ENCODE measurements at regions of chr2 and their contacts with region 1.

Region 1: DNA sequence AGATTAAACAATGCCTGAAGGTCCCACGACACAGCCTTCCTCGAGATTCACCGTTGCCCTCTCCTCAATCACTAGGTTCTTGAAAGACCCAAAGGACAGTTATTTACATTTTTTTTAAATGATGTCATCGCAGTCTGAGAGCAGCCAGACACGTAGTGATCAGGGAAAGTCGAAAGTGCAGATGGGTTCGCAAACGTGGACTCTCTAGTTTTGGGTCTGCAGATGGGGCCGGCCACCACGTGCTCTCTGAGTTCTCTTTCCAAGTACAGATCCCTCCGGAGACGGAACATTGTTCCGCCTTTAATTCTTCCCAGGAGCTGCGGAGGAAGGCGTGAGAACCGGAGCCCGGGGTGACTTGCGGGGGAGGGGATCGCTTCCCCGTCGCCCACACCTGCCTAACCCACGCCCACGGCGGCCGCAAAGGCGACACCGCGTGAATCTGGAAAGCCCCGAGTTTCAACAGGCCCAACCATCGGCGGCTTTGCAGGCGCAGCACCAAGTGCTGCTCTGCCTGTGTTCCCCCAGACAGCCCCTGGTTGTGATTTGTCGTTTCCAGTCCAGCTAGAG is 54.3 kb downstream of the PKDCC start:
- H3K4me3 Mint-ChIP-seq: peak overlapping the region; percentile 51
- H3K27ac Mint-ChIP-seq: peak overlapping the region; percentile 94
- H3K4me1 Mint-ChIP-seq: peaks cover 58% of the 10 kb centered on the region
- H3K27me3 Mint-ChIP-seq: peaks cover 3% of the 10 kb centered on the region

Region 2: GRCh38 chr2:42047488-42048298 is 54.4 kb before region 1 on chr2 and contains the start of gene PKDCC:
- intact Hi-C with region 1: no loop called
- H3K4me3 Mint-ChIP-seq: peak within 1 kb of the TSS; percentile 47
- H3K27ac Mint-ChIP-seq: no peak within 1 kb of the TSS
- H3K4me1 Mint-ChIP-seq: no peaks in the 10 kb centered on the region
- H3K27me3 Mint-ChIP-seq: peaks cover 78% of the 10 kb centered on the region

Region 3: DNA sequence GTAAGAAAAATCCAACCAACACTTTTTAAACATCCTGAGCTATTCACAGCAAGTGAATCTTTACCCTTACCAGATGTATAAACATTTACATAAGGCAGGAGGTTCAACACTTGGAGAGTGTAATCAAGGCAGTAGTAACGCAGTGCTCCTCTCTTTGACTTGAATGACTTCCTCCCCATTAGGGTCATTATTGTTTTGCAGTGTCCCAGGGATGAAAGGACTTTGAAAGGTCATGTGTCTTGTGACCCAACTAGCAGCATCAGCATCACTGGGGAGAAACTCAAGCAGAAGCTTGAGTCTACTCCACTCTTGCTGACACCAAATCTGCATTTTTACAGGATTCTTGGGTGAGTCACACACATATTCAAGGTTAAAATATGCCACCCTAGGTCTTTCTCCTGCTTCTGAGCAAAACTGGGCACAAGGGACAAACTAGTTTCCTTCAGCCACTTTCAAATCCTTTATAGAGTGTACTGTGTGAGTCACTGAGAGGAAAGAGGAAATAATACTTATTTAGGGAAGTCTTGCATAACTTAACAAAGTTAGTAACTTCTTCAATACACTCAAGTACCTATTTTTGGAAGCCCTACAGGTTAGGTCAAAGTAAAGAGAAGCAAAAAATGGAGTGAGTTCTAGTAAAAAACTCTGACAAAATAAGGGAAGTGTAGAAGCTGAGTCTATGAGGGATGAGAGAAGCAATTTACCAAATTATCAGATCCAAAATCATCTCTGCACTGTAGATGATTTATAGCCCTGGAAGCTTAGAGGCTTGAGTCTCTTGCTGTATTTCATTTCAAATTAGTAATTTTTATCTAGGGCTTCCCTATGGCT is 16.0 kb after region 1 on chr2:
- intact Hi-C with region 1: loop called (anchors 1 kb)
- H3K4me3 Mint-ChIP-seq: no peak overlapping the region
- H3K27ac Mint-ChIP-seq: peak overlapping the region; percentile 72
- H3K4me1 Mint-ChIP-seq: peaks cover 58% of the 10 kb centered on the region
- H3K27me3 Mint-ChIP-seq: peaks cover 3% of the 10 kb centered on the region

Region 4: DNA sequence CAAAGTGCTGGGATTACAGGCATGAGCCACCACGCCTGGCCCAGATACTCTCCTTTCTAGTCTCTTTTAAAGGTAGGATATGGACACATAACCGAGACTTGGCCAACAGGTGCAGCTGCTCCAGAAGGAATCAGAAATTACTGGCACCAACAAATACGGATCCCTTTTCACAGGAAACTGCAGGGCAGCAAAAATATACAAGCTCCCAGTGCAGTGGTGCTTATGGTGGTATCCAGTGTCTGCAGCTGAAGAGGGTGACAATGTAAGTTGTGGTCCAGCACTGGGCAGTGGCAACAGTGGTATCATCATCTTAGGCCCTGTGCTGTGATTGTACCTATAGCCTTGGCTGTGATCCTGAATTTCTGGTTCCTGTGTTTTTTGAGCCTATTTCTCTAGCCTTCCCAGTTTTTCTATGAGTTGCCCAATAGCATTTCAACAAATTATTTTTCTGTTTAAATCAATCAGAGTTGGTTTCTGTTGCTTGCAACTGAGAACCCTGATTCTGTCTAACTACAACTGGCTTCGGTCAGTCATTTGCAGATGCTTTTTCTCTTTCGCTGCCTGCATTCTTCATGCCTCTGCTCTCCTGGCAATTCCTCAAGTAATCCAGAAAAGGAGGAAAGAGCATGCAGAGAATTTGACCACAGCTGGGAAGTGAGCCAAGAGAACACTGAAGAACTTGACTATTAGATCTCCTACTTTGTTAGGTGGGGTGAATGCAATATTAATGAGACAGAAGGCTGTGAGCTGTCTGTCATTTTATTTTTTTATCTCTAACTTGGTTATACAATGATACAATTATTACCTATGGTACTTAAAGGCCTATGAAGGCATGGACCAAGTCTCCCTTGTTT is 36.3 kb after region 1 on chr2:
- intact Hi-C with region 1: loop called (anchors 5 kb)
- H3K4me3 Mint-ChIP-seq: no peak overlapping the region
- H3K27ac Mint-ChIP-seq: no peak overlapping the region
- H3K4me1 Mint-ChIP-seq: peaks cover 62% of the 10 kb centered on the region
- H3K27me3 Mint-ChIP-seq: peaks cover 22% of the 10 kb centered on the region